Natural killer cell (primary cell): ENCODE measurements at regions of chr17 and their contacts with region 1.

Region 1: GRCh38 chr17:9402590-9403199 is 172.9 kb downstream of the STX8 start:
- DNase-seq: peak in 1 of 2 donors; percentile 48
- ATAC-seq: peak in 2 of 3 donors; percentile 47 to 60
- H3K4me3 ChIP-seq: no peak overlapping the region
- H3K4me3 Mint-ChIP-seq: no peak overlapping the region
- H3K27ac ChIP-seq: no peak overlapping the region
- H3K27ac Mint-ChIP-seq: peak overlapping the region in 1 of 2 donors; percentile 20
- H3K4me1 ChIP-seq: no peaks in the 10 kb centered on the region
- H3K4me1 Mint-ChIP-seq: peaks cover 12 to 15% of the 10 kb centered on the region in 2 donors
- H3K27me3 ChIP-seq: no peaks in the 10 kb centered on the region
- H3K27me3 Mint-ChIP-seq: no peaks in the 10 kb centered on the region
- CTCF ChIP-seq: peak; percentile 61

Region 2: DNA sequence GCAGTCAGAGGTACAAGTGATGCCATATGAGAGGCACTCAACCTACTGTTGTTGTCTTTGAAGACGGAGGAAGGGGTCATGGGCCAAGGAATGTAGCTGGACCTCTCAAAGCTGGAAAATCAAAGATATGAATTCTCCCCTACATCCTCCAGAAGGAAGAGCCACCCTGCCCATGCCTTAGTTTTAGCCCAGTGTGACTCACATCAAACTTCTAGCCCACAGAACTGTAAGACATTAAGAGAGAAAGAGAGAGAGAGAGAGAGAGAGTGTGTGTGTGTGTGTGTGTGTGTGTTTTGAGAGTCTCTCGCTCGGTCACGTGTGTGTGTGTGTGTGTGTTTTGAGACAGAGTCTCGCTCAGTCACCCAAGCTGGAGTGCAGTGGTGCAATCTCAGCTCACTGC is 85.9 kb after region 1 on chr17:
- intact Hi-C with region 1: no loop called
- DNase-seq: no peak
- ATAC-seq: no peak
- H3K4me3 ChIP-seq: no peak overlapping the region
- H3K4me3 Mint-ChIP-seq: no peak overlapping the region
- H3K27ac ChIP-seq: no peak overlapping the region
- H3K27ac Mint-ChIP-seq: peak overlapping the region in 1 of 2 donors; percentile 8
- H3K4me1 ChIP-seq: no peaks in the 10 kb centered on the region
- H3K4me1 Mint-ChIP-seq: peaks cover 9 to 27% of the 10 kb centered on the region in 2 donors
- H3K27me3 ChIP-seq: no peaks in the 10 kb centered on the region
- H3K27me3 Mint-ChIP-seq: no peaks in the 10 kb centered on the region
- CTCF ChIP-seq: no peak

Region 3: DNA sequence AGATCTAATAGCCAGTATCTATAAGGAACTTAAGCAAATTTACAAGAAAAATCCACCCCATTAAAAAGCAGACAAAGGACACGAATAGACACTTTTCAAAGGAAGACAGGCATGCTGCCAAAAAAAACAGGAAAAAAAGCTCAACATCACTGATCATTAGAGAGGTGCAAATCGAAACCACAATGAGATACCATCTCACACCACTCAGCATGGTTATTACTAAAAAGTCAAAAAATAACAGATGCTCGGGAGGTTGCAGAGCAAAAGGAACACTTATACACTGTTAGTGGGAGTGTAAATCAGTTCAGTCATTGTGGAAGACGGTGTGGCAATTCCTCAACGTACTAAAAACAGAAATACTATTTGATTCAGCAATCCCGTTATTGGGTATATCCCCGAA is 163.4 kb after region 1 on chr17:
- intact Hi-C with region 1: loop called (anchors 2 kb)
- DNase-seq: peak in 1 of 2 donors; percentile 51
- ATAC-seq: peak; percentile 15 to 45 (median 30)
- H3K4me3 ChIP-seq: no peak overlapping the region
- H3K4me3 Mint-ChIP-seq: peak overlapping the region; percentile 82
- H3K27ac ChIP-seq: peak overlapping the region; percentile 50
- H3K27ac Mint-ChIP-seq: peak overlapping the region; percentile 80 to 82
- H3K4me1 ChIP-seq: peaks cover 22% of the 10 kb centered on the region
- H3K4me1 Mint-ChIP-seq: peaks cover 48 to 54% of the 10 kb centered on the region in 2 donors
- H3K27me3 ChIP-seq: no peaks in the 10 kb centered on the region
- H3K27me3 Mint-ChIP-seq: no peaks in the 10 kb centered on the region
- CTCF ChIP-seq: no peak